ENCODE measurements at regions of chr19 and their contacts with region 1.

Region 1: DNA sequence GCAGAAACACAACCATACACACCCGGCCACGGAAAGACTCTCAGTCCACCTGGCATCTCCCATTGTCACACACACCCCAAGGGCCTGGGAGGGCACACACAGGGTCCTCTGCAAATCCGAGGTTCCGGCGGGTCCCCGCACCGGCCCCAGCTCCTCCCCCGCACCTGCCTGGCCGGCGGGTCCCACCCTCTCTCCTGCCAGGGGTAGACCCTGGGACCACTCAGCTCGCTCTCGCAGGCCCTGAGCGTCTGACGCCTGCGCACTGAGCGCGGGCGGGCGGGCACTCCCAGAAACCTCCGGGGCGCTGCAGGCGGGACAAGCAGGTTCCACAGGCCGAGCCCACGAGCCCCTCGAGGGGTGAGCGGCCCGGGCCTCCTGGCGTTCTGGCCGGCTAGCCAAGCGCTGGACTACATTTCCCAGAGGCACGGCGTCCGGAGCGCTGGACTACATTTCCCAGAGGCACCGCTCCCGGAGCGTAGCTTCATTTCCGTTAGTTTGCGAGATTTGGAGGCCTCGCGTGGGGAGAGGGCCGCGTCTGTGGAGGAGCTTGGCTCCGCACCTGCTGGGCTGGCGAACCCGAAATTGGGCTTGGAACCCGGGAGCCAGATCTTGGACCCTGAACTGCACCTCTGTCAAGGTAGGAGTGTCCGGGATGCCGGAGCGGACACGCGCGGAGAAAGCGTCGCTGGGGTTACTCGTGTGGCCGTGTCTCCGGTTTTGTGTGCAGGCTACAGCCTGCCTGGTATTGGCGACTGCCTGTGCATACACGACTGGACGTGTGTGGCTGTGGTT is at the start of gene ZNF420:
- DNase-seq: peak; percentile 93 to 95
- ATAC-seq: peak; percentile 98 to 99 (median 99)
- H3K4me3 ChIP-seq: peak within 1 kb of the TSS; percentile 61 to 98 (median 80)
- H3K27ac ChIP-seq: peak within 1 kb of the TSS; percentile 60 to 92 (median 88)
- H3K4me1 ChIP-seq: peaks cover 2 to 33% (median 22%) of the 10 kb centered on the region in 9 donors
- H3K27me3 ChIP-seq: no peaks in the 10 kb centered on the region
- CTCF ChIP-seq: peak in 2 of 9 donors; percentile 18 to 25
- total RNA-seq, gene ZNF420: 5.2 to 12.5 (median 8.5) TPM

Region 2: GRCh38 chr19:36973021-36973843 is 104.9 kb before region 1 on chr19:
- intact Hi-C with region 1: loop called in 2 of 10 experiments (anchors 10 kb)
- DNase-seq: peak; percentile 89
- ATAC-seq: peak; percentile 97 to 100 (median 100)
- H3K4me3 ChIP-seq: peak overlapping the region; percentile 48 to 92 (median 74)
- H3K27ac ChIP-seq: peak overlapping the region; percentile 59 to 91 (median 74)
- H3K4me1 ChIP-seq: peaks cover 5 to 19% (median 14%) of the 10 kb centered on the region in 9 donors
- H3K27me3 ChIP-seq: no peaks in the 10 kb centered on the region
- CTCF ChIP-seq: peak; percentile 74 to 98 (median 94)

Region 3: DNA sequence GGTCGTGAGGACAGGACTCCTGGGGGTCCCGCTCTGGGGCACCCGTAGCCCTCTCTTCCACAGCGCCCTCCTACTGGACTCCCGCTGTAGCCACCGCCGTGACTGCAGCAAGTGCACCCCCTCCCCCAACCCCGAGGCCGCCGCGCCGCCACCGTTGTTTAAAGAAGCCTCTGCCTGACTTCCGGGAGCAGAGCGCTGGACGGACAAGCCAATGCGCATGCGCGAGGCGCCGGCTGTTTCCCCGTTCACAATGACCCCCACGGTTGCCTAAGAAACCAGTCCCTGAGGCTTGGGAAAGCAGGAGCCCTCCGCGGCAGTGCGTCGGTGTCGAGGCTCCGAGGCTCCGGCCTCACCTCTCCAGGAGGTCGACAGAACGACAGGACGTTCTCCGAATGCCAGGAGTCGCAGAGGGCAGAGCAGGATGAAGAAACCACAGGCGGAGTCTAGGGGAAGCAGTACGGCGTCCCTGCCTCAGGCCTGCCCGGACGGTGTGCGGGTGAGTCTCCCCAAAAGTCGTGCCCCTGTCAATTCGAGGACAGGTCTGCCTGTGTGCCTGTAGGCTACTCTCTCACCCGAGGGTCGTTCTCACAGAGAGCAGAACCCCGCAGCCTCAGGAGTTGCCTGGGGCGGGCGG is 70.4 kb before region 1 on chr19:
- intact Hi-C with region 1: no loop called
- DNase-seq: peak; percentile 82 to 87
- ATAC-seq: peak; percentile 91 to 97 (median 93)
- H3K4me3 ChIP-seq: peak overlapping the region; percentile 39 to 70 (median 61)
- H3K27ac ChIP-seq: peak overlapping the region in 9 of 10 donors; percentile 4 to 74 (median 69)
- H3K4me1 ChIP-seq: peaks cover 0 to 13% (median 2%) of the 10 kb centered on the region in 9 donors
- H3K27me3 ChIP-seq: no peaks in the 10 kb centered on the region
- CTCF ChIP-seq: peak in 1 of 9 donors; percentile 5

Region 4: GRCh38 chr19:37172368-37173366 is 94.5 kb after region 1 on chr19 and contains the start of gene ZNF585A:
- intact Hi-C with region 1: loop called in 1 of 10 experiments (anchors 1 kb)
- DNase-seq: peak; percentile 86 to 95
- ATAC-seq: peak; percentile 100
- H3K4me3 ChIP-seq: peak within 1 kb of the TSS; percentile 45 to 78 (median 62)
- H3K27ac ChIP-seq: peak within 1 kb of the TSS in 9 of 10 donors; percentile 47 to 82 (median 66)
- H3K4me1 ChIP-seq: peaks cover 0 to 11% (median 6%) of the 10 kb centered on the region in 9 donors
- H3K27me3 ChIP-seq: no peaks in the 10 kb centered on the region
- CTCF ChIP-seq: peak in 6 of 9 donors; percentile 26 to 57 (median 39)
- total RNA-seq, gene ZNF585A: 7.1 to 17.0 (median 13.0) TPM

Region 5: GRCh38 chr19:37309834-37310575 is 231.9 kb after region 1 on chr19:
- intact Hi-C with region 1: loop called in 1 of 10 experiments (anchors 10 kb)
- DNase-seq: no peak
- ATAC-seq: no peak
- H3K4me3 ChIP-seq: no peak overlapping the region
- H3K27ac ChIP-seq: no peak overlapping the region
- H3K4me1 ChIP-seq: peaks cover 0 to 11% (median 5%) of the 10 kb centered on the region in 9 donors
- H3K27me3 ChIP-seq: no peaks in the 10 kb centered on the region
- CTCF ChIP-seq: peak in 1 of 9 donors; percentile 11

Region 6: GRCh38 chr19:37817180-37817981 is 739.3 kb after region 1 on chr19:
- intact Hi-C with region 1: loop called in 1 of 10 experiments (anchors 5 kb)
- DNase-seq: peak; percentile 89
- ATAC-seq: peak; percentile 91 to 98 (median 96)
- H3K4me3 ChIP-seq: peak overlapping the region; percentile 51 to 93 (median 80)
- H3K27ac ChIP-seq: peak overlapping the region in 9 of 10 donors; percentile 17 to 68 (median 60)
- H3K4me1 ChIP-seq: peaks cover 0 to 14% (median 6%) of the 10 kb centered on the region in 9 donors
- H3K27me3 ChIP-seq: no peaks in the 10 kb centered on the region
- CTCF ChIP-seq: no peak